ENCODE measurements at regions of chr1 and their contacts with region 1.

Region 1: GRCh38 chr1:117128323-117129079 is 7.0 kb upstream of the TRIM45 start:
- DNase-seq: peak; percentile 47
- H3K4me3 ChIP-seq: no peak overlapping the region; a peak in 1 of 4 replicates
- H3K27ac ChIP-seq: peak overlapping the region in 1 of 2 experiments; percentile 42; a peak in 1 of 4 replicates
- H3K4me1 ChIP-seq: peaks cover 0 to 8% of the 10 kb centered on the region in 2 experiments; a peak in 2 of 4 replicates
- H3K27me3 ChIP-seq: no peaks in the 10 kb centered on the region
- CTCF ChIP-seq: peak; percentile 76
- EP300 ChIP-seq: no peak
- RAD21 ChIP-seq: peak; percentile 69

Region 2: GRCh38 chr1:117059678-117060440 is 68.6 kb before region 1 on chr1 and contains the start of gene TTF2:
- CTCF ChIA-PET with region 1: interaction called, 10 read pairs
- POLR2A ChIA-PET with region 1: no interaction called
- DNase-seq: peak; percentile 96
- H3K4me3 ChIP-seq: peak within 1 kb of the TSS; percentile 76 to 91
- H3K27ac ChIP-seq: peak within 1 kb of the TSS; percentile 53 to 83; a peak in 3 of 4 replicates
- H3K4me1 ChIP-seq: peaks cover 7 to 13% of the 10 kb centered on the region in 2 experiments; a peak in 3 of 4 replicates
- H3K27me3 ChIP-seq: no peaks in the 10 kb centered on the region
- CTCF ChIP-seq: no peak
- EP300 ChIP-seq: no peak
- RAD21 ChIP-seq: no peak
- polyA plus RNA-seq, gene TTF2: 10.8 and 12.2 TPM in 2 replicates

Region 3: DNA sequence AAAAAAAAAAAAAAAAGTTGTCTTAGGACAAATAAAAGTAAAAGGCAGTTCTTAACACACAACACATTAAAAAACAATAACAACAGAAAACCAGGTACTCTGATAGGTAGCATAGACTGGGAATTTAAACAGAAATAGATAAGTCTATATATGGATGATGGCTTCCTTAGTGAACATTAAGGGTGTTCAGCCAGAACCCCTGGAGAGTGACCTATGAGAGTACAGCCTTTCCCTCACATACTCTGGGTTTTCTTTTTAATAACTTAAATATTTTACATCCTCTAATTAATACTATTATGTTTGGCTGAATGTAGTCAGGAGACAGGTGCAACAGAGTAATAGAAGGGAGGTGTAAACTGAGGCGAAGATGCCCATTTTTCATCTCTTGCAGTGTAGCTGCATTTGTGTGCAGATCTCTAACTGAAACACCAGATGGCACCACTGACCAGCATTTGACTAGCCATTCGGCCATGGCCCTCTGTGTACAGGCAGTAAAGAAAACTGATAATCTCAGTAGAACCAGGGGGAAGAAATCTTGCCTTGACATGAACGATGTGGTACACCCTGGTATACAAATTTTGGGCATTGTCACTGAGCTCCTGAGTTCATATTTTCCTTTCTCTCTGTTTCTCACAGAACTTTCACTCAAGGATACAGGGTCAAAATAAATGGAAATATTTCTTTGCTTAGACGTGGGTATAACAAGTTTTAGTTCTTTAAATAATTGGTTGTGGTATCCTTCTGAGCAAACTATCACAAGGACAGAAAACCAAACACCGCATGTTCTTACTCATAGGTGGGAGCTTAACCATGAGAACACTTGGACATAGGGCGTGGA is 60.7 kb before region 1 on chr1:
- CTCF ChIA-PET with region 1: interaction called, 78 read pairs
- POLR2A ChIA-PET with region 1: interaction called, 3 read pairs
- DNase-seq: peak; percentile 70
- H3K4me3 ChIP-seq: no peak overlapping the region; a peak in 1 of 4 replicates
- H3K27ac ChIP-seq: no peak overlapping the region
- H3K4me1 ChIP-seq: no peaks in the 10 kb centered on the region
- H3K27me3 ChIP-seq: no peaks in the 10 kb centered on the region
- CTCF ChIP-seq: peak; percentile 89
- EP300 ChIP-seq: no peak
- RAD21 ChIP-seq: peak; percentile 97

Region 4: DNA sequence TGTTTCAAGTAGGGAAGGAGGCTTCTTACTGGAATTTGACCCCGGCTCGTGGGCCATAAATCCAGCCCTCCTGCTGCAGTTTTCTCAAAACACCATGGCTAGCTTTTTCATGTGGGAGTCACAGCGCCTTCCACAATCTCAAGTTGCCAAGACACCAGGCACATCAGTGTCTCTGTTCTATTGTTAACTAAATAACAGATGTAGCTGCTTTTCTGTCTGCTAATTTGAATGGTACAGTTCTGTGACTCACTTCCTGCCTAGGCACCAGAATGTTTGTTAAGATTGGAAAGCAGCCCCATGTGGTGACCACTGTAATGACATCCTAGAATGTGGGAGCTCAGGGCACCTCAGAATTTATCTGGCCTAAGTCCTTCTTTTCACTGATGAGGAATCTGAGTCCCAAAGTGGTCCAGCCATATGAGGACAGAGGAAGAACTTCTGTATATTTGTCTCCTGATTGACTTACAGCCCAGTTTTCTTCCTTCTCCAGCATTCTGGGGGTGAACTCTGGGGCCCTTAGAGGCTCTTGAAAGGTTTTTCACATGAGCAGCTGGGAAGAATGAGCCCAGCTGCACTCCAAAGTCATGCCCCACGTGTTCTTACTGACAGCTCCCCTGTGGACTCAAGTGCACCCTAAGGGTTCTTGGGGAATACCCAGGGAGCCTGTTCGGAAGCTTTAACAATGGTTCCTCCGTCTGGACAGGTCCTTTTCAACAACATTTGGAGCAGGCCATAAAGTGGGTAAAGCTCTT is 34.5 kb before region 1 on chr1:
- CTCF ChIA-PET with region 1: interaction called, 14 read pairs
- POLR2A ChIA-PET with region 1: no interaction called
- DNase-seq: peak; percentile 23
- H3K4me3 ChIP-seq: no peak overlapping the region; a peak in 1 of 4 replicates
- H3K27ac ChIP-seq: peak overlapping the region; percentile 87 to 98
- H3K4me1 ChIP-seq: peaks cover 6 to 54% of the 10 kb centered on the region in 2 experiments
- H3K27me3 ChIP-seq: no peaks in the 10 kb centered on the region
- CTCF ChIP-seq: peak; percentile 53
- EP300 ChIP-seq: 0 out of 4 replicates have a peak, but pooled peaks of 1 of the 2 experiments have one; percentile 27
- RAD21 ChIP-seq: no peak

Region 5: GRCh38 chr1:117142200-117142599 is 13.7 kb after region 1 on chr1:
- CTCF ChIA-PET with region 1: interaction called, 25 read pairs
- POLR2A ChIA-PET with region 1: no interaction called
- DNase-seq: peak; percentile 10
- H3K4me3 ChIP-seq: no peak overlapping the region
- H3K27ac ChIP-seq: peak overlapping the region in 1 of 2 experiments; percentile 92; a peak in 2 of 4 replicates
- H3K4me1 ChIP-seq: peaks cover 2 to 32% of the 10 kb centered on the region in 2 experiments; a peak in 3 of 4 replicates
- H3K27me3 ChIP-seq: no peaks in the 10 kb centered on the region
- CTCF ChIP-seq: no peak
- EP300 ChIP-seq: peak; percentile 78 to 96
- RAD21 ChIP-seq: no peak

Region 6: GRCh38 chr1:117161898-117162297 is 33.4 kb after region 1 on chr1:
- CTCF ChIA-PET with region 1: interaction called, 11 read pairs
- POLR2A ChIA-PET with region 1: no interaction called
- DNase-seq: no peak
- H3K4me3 ChIP-seq: no peak overlapping the region
- H3K27ac ChIP-seq: no peak overlapping the region
- H3K4me1 ChIP-seq: no peaks in the 10 kb centered on the region
- H3K27me3 ChIP-seq: no peaks in the 10 kb centered on the region
- CTCF ChIP-seq: no peak
- EP300 ChIP-seq: no peak
- RAD21 ChIP-seq: no peak